Caco-2 (cell line): ENCODE measurements at regions of chr12 and their contacts with region 1.

Region 1: DNA sequence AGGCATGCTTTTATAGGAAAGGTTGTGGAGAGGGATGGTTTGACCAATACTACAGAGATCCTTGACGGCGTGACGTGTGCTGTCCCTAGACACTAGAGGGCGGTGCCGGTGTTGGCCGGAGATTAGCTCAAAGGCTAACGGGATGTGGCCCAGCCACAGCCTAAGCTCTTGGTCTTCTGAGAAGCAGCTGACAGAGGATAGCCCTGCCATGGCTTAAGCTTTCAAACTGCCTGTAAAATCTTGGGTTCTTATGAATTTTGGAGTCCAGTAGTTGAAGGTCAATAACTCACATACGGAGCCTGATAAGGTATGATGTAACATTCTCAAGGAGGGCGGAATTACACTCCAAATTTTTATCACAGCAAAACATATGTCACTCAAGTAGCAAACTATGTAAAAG is 515.7 kb upstream of the ATXN7L3B start:
- DNase-seq: peak; percentile 80 to 82
- H3K4me3 ChIP-seq: no peak overlapping the region
- H3K4me3 Mint-ChIP-seq: no peak overlapping the region
- H3K27ac Mint-ChIP-seq: no peak overlapping the region
- H3K4me1 ChIP-seq: 0 out of 2 replicates have a peak, but pooled peaks cover 3% of the 10 kb centered on the region
- H3K4me1 Mint-ChIP-seq: no peaks in the 10 kb centered on the region
- H3K27me3 ChIP-seq: no peaks in the 10 kb centered on the region
- H3K27me3 Mint-ChIP-seq: no peaks in the 10 kb centered on the region
- CTCF ChIP-seq: peak; percentile 79 to 93

Region 2: GRCh38 chr12:73935817-73936216 is 86.1 kb before region 1 on chr12:
- CTCF ChIA-PET with region 1: no interaction called
- POLR2A ChIA-PET with region 1: no interaction called
- intact Hi-C with region 1: loop called (anchors 5 kb)
- DNase-seq: peak in 1 of 2 experiments; percentile 22
- H3K4me3 ChIP-seq: no peak overlapping the region
- H3K4me3 Mint-ChIP-seq: no peak overlapping the region
- H3K27ac Mint-ChIP-seq: no peak overlapping the region
- H3K4me1 ChIP-seq: no peaks in the 10 kb centered on the region
- H3K4me1 Mint-ChIP-seq: no peaks in the 10 kb centered on the region
- H3K27me3 ChIP-seq: no peaks in the 10 kb centered on the region
- H3K27me3 Mint-ChIP-seq: no peaks in the 10 kb centered on the region
- CTCF ChIP-seq: peak; percentile 48 to 54

Region 3: DNA sequence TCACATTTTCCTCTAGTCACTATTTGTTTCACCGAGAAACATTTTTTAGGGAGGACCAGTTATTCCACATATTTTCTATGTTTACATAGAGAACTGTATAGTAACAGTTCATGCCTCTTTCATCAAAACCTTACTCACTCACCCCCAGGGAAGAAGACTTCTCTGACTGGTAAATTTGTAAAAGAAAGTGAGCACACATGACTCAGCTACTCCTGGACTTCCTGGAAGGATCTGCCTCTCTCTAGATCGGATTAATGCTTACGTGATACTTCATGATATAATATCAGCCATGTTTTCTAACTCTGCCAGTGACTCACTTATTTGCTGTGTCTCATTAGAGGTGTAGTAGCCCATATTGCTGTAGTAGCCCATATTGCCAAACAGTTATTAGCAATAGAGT is 21.4 kb after region 1 on chr12:
- CTCF ChIA-PET with region 1: interaction called, 5 read pairs
- POLR2A ChIA-PET with region 1: no interaction called
- intact Hi-C with region 1: loop called (anchors 1 kb)
- DNase-seq: peak in 1 of 2 experiments; percentile 72
- H3K4me3 ChIP-seq: no peak overlapping the region
- H3K4me3 Mint-ChIP-seq: peak overlapping the region; percentile 42
- H3K27ac Mint-ChIP-seq: peak overlapping the region; percentile 58
- H3K4me1 ChIP-seq: peaks cover 20% of the 10 kb centered on the region
- H3K4me1 Mint-ChIP-seq: peaks cover 33% of the 10 kb centered on the region
- H3K27me3 ChIP-seq: no peaks in the 10 kb centered on the region
- H3K27me3 Mint-ChIP-seq: no peaks in the 10 kb centered on the region
- CTCF ChIP-seq: no peak

Region 4: GRCh38 chr12:74076918-74077317 is 55.0 kb after region 1 on chr12:
- CTCF ChIA-PET with region 1: no interaction called
- POLR2A ChIA-PET with region 1: no interaction called
- intact Hi-C with region 1: loop called (anchors 5 kb)
- DNase-seq: no peak
- H3K4me3 ChIP-seq: no peak overlapping the region
- H3K4me3 Mint-ChIP-seq: no peak overlapping the region
- H3K27ac Mint-ChIP-seq: no peak overlapping the region
- H3K4me1 ChIP-seq: no peaks in the 10 kb centered on the region
- H3K4me1 Mint-ChIP-seq: no peaks in the 10 kb centered on the region
- H3K27me3 ChIP-seq: no peaks in the 10 kb centered on the region
- H3K27me3 Mint-ChIP-seq: no peaks in the 10 kb centered on the region
- CTCF ChIP-seq: no peak

Region 5: GRCh38 chr12:74152370-74152769 is 130.4 kb after region 1 on chr12:
- CTCF ChIA-PET with region 1: no interaction called
- POLR2A ChIA-PET with region 1: no interaction called
- intact Hi-C with region 1: no loop called
- DNase-seq: no peak
- H3K4me3 ChIP-seq: no peak overlapping the region
- H3K4me3 Mint-ChIP-seq: no peak overlapping the region
- H3K27ac Mint-ChIP-seq: no peak overlapping the region
- H3K4me1 ChIP-seq: no peaks in the 10 kb centered on the region
- H3K4me1 Mint-ChIP-seq: no peaks in the 10 kb centered on the region
- H3K27me3 ChIP-seq: no peaks in the 10 kb centered on the region
- H3K27me3 Mint-ChIP-seq: no peaks in the 10 kb centered on the region
- CTCF ChIP-seq: no peak

Region 6: GRCh38 chr12:74317078-74317601 is 295.2 kb after region 1 on chr12:
- CTCF ChIA-PET with region 1: interaction called, 14 read pairs
- POLR2A ChIA-PET with region 1: no interaction called
- intact Hi-C with region 1: loop called (anchors 1 kb)
- DNase-seq: peak in 1 of 2 experiments; percentile 42
- H3K4me3 ChIP-seq: no peak overlapping the region
- H3K4me3 Mint-ChIP-seq: no peak overlapping the region
- H3K27ac Mint-ChIP-seq: no peak overlapping the region
- H3K4me1 ChIP-seq: no peaks in the 10 kb centered on the region
- H3K4me1 Mint-ChIP-seq: no peaks in the 10 kb centered on the region
- H3K27me3 ChIP-seq: no peaks in the 10 kb centered on the region
- H3K27me3 Mint-ChIP-seq: no peaks in the 10 kb centered on the region
- CTCF ChIP-seq: peak; percentile 44 to 54

Region 7: GRCh38 chr12:74365178-74365964 is 343.4 kb after region 1 on chr12:
- CTCF ChIA-PET with region 1: no interaction called
- POLR2A ChIA-PET with region 1: no interaction called
- intact Hi-C with region 1: loop called (anchors 1 kb)
- DNase-seq: peak; percentile 44 to 60
- H3K4me3 ChIP-seq: no peak overlapping the region
- H3K4me3 Mint-ChIP-seq: no peak overlapping the region
- H3K27ac Mint-ChIP-seq: no peak overlapping the region
- H3K4me1 ChIP-seq: no peaks in the 10 kb centered on the region
- H3K4me1 Mint-ChIP-seq: no peaks in the 10 kb centered on the region
- H3K27me3 ChIP-seq: no peaks in the 10 kb centered on the region
- H3K27me3 Mint-ChIP-seq: no peaks in the 10 kb centered on the region
- CTCF ChIP-seq: peak; percentile 34 to 43

Region 8: DNA sequence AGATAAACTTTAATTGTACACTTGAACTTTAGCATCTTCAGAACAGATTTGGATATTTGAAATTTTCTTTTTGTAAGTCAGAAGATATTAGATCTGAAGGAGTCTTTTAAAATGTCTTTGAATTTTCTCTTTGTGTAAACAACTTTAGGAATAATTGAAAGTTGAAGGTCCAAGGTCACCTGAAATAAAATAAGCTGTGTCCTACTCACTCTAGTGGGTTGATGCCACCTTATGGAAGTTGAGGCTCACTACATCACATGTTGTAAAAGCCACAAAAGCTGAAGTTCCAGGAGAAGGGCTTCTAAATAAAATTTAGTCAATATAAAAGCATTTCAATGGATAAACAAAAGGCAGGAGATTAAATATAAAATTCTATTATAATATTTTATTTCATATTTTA is 393.7 kb after region 1 on chr12:
- CTCF ChIA-PET with region 1: interaction called, 10 read pairs
- POLR2A ChIA-PET with region 1: no interaction called
- intact Hi-C with region 1: loop called (anchors 1 kb)
- DNase-seq: peak in 1 of 2 experiments; percentile 23
- H3K4me3 ChIP-seq: no peak overlapping the region
- H3K4me3 Mint-ChIP-seq: no peak overlapping the region
- H3K27ac Mint-ChIP-seq: no peak overlapping the region
- H3K4me1 ChIP-seq: no peaks in the 10 kb centered on the region
- H3K4me1 Mint-ChIP-seq: no peaks in the 10 kb centered on the region
- H3K27me3 ChIP-seq: no peaks in the 10 kb centered on the region
- H3K27me3 Mint-ChIP-seq: no peaks in the 10 kb centered on the region
- CTCF ChIP-seq: peak; percentile 24 to 55